CD8-positive, alpha-beta memory T cell (primary cell): ENCODE measurements at regions of chr1 and their contacts with region 1.

Region 1: GRCh38 chr1:181142096-181142958 is 53.8 kb downstream of the IER5 start:
- DNase-seq: peak; percentile 76 to 89 (median 80)
- H3K4me3 ChIP-seq: no peak overlapping the region
- H3K4me3 Mint-ChIP-seq: peak overlapping the region in 1 of 7 donors; percentile 36
- H3K27ac ChIP-seq: no peak overlapping the region
- H3K27ac Mint-ChIP-seq: peak overlapping the region in 5 of 8 donors; percentile 13 to 58 (median 47)
- H3K4me1 ChIP-seq: peaks cover 18% of the 10 kb centered on the region
- H3K4me1 Mint-ChIP-seq: peaks cover 21 to 30% (median 29%) of the 10 kb centered on the region in 3 donors
- H3K27me3 ChIP-seq: no peaks in the 10 kb centered on the region
- H3K27me3 Mint-ChIP-seq: peaks cover 0 to 3% of the 10 kb centered on the region in 2 donors

Region 2: GRCh38 chr1:181033799-181034451 is 108.4 kb before region 1 on chr1 and contains the start of gene MR1:
- CTCF ChIA-PET with region 1: interaction called, 76 read pairs
- POLR2A ChIA-PET with region 1: interaction called, 3 read pairs
- DNase-seq: peak; percentile 2 to 87 (median 66)
- H3K4me3 ChIP-seq: peak within 1 kb of the TSS; percentile 81
- H3K4me3 Mint-ChIP-seq: peak within 1 kb of the TSS; percentile 90 to 99 (median 97)
- H3K27ac ChIP-seq: peak within 1 kb of the TSS; percentile 87
- H3K27ac Mint-ChIP-seq: peak within 1 kb of the TSS; percentile 97 to 100 (median 99)
- H3K4me1 ChIP-seq: peaks cover 53% of the 10 kb centered on the region
- H3K4me1 Mint-ChIP-seq: peaks cover 50 to 65% (median 65%) of the 10 kb centered on the region in 3 donors
- H3K27me3 ChIP-seq: no peaks in the 10 kb centered on the region
- H3K27me3 Mint-ChIP-seq: no peaks in the 10 kb centered on the region
- total RNA-seq, gene MR1: 13.8 to 16.4 TPM

Region 3: GRCh38 chr1:181077576-181078242 is 64.6 kb before region 1 on chr1:
- CTCF ChIA-PET with region 1: interaction called, 27 read pairs
- POLR2A ChIA-PET with region 1: no interaction called
- DNase-seq: no peak
- H3K4me3 ChIP-seq: no peak overlapping the region
- H3K4me3 Mint-ChIP-seq: no peak overlapping the region
- H3K27ac ChIP-seq: no peak overlapping the region
- H3K27ac Mint-ChIP-seq: no peak overlapping the region
- H3K4me1 ChIP-seq: no peaks in the 10 kb centered on the region
- H3K4me1 Mint-ChIP-seq: peaks cover 0 to 4% (median 0%) of the 10 kb centered on the region in 3 donors
- H3K27me3 ChIP-seq: no peaks in the 10 kb centered on the region
- H3K27me3 Mint-ChIP-seq: peaks cover 28 to 53% of the 10 kb centered on the region in 2 donors

Region 4: GRCh38 chr1:181105134-181106021 is 36.9 kb before region 1 on chr1:
- CTCF ChIA-PET with region 1: interaction called, 12 read pairs
- POLR2A ChIA-PET with region 1: interaction called, 6 read pairs
- DNase-seq: peak; percentile 86 to 97 (median 92)
- H3K4me3 ChIP-seq: peak overlapping the region; percentile 52
- H3K4me3 Mint-ChIP-seq: peak overlapping the region; percentile 84 to 93 (median 89)
- H3K27ac ChIP-seq: peak overlapping the region; percentile 82
- H3K27ac Mint-ChIP-seq: peak overlapping the region; percentile 92 to 99 (median 96)
- H3K4me1 ChIP-seq: peaks cover 39% of the 10 kb centered on the region
- H3K4me1 Mint-ChIP-seq: peaks cover 26 to 46% (median 41%) of the 10 kb centered on the region in 3 donors
- H3K27me3 ChIP-seq: no peaks in the 10 kb centered on the region
- H3K27me3 Mint-ChIP-seq: peaks cover 4 to 7% of the 10 kb centered on the region in 2 donors

Region 5: GRCh38 chr1:181128592-181129497 is 13.5 kb before region 1 on chr1:
- CTCF ChIA-PET with region 1: interaction called, 15 read pairs
- POLR2A ChIA-PET with region 1: no interaction called
- DNase-seq: no peak
- H3K4me3 ChIP-seq: no peak overlapping the region
- H3K4me3 Mint-ChIP-seq: no peak overlapping the region
- H3K27ac ChIP-seq: peak overlapping the region; percentile 54
- H3K27ac Mint-ChIP-seq: no peak overlapping the region
- H3K4me1 ChIP-seq: peaks cover 11% of the 10 kb centered on the region
- H3K4me1 Mint-ChIP-seq: peaks cover 4 to 7% (median 5%) of the 10 kb centered on the region in 3 donors
- H3K27me3 ChIP-seq: no peaks in the 10 kb centered on the region
- H3K27me3 Mint-ChIP-seq: peaks cover 1 to 4% of the 10 kb centered on the region in 2 donors

Region 6: GRCh38 chr1:181159451-181160140 is 17.3 kb after region 1 on chr1:
- CTCF ChIA-PET with region 1: interaction called, 81 read pairs
- POLR2A ChIA-PET with region 1: no interaction called
- DNase-seq: peak; percentile 20 to 73 (median 58)
- H3K4me3 ChIP-seq: peak overlapping the region; percentile 9
- H3K4me3 Mint-ChIP-seq: peak overlapping the region; percentile 24 to 80 (median 66)
- H3K27ac ChIP-seq: no peak overlapping the region
- H3K27ac Mint-ChIP-seq: peak overlapping the region; percentile 77 to 95 (median 92)
- H3K4me1 ChIP-seq: peaks cover 44% of the 10 kb centered on the region
- H3K4me1 Mint-ChIP-seq: peaks cover 31 to 41% (median 37%) of the 10 kb centered on the region in 3 donors
- H3K27me3 ChIP-seq: no peaks in the 10 kb centered on the region
- H3K27me3 Mint-ChIP-seq: no peaks in the 10 kb centered on the region